IMR-90 (cell line): ENCODE measurements at regions of chr2 and their contacts with region 1.

Region 1: GRCh38 chr2:30146438-30147147 is at the start of gene YPEL5:
- DNase-seq: peak; percentile 99
- ATAC-seq: peak; percentile 93
- H3K4me3 ChIP-seq: peak within 1 kb of the TSS; percentile 67
- H3K27ac ChIP-seq: peak within 1 kb of the TSS; percentile 91
- H3K4me1 ChIP-seq: peaks cover 7% of the 10 kb centered on the region
- H3K27me3 ChIP-seq: no peaks in the 10 kb centered on the region
- CTCF ChIP-seq: no peak
- POLR2A ChIP-seq: peak; percentile 96
- RAD21 ChIP-seq: no peak
- total RNA-seq, gene YPEL5: 40.7 and 54.7 TPM in 2 replicates

Region 2: DNA sequence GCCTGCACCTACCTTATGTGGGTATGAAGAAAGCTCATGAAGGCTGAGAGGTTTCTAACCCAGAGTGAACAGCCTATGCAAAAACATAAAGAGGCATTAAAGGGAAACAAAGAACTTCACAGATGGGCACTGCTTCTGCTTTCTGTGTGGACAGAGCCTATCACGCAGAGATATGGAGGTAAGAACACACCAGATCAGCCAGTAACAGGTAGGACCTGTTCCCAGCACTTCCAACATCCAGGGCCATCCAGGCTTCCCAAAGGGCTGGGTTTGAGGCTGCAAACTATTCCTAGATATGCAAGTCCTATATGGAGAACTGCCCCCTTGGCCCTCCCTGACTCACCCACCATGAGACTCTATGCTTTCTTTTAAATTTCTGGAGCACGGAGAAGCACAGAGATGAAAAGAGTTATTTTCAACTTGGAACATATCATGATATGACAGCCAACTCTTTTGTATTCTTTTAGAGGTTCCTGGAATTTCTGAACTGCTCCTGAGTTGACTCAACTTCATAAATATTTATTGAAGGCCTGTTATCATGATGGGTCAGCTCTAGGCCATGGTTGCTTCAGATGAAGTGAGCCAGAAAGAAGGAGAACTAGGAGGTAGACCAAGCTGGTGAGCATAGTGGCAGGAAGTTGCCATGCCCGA is 1472.4 kb before region 1 on chr2:
- CTCF ChIA-PET with region 1: no interaction called
- POLR2A ChIA-PET with region 1: interaction called, 11 read pairs
- dilution Hi-C with region 1: no loop called
- in situ Hi-C with region 1: no loop called
- intact Hi-C with region 1: no loop called
- DNase-seq: peak; percentile 88
- ATAC-seq: peak; percentile 93
- H3K4me3 ChIP-seq: no peak overlapping the region
- H3K27ac ChIP-seq: peak overlapping the region; percentile 81
- H3K4me1 ChIP-seq: peaks cover 19% of the 10 kb centered on the region
- H3K27me3 ChIP-seq: no peaks in the 10 kb centered on the region
- CTCF ChIP-seq: no peak
- POLR2A ChIP-seq: no peak
- RAD21 ChIP-seq: no peak

Region 3: DNA sequence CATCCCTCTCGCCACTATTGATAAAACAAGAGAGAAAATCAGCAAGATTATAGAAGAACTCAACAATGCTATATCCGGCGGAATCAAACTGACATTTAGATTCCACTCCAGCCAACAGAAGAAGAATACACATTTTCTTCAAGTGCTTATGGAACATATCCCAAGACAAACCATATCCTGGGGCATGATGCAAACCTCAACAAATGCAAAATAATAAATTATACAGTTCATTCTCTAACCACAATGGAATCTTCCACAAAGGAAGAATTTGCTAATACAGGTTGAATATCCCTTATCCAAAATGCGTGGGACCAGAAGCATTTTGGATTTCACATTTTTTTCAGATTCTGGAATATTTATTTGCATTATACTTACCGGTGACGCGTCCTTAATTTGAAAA is 51.2 kb before region 1 on chr2:
- CTCF ChIA-PET with region 1: no interaction called
- POLR2A ChIA-PET with region 1: no interaction called
- dilution Hi-C with region 1: no loop called
- in situ Hi-C with region 1: no loop called
- intact Hi-C with region 1: loop called (anchors 1 kb)
- DNase-seq: peak; percentile 7
- ATAC-seq: no peak
- H3K4me3 ChIP-seq: no peak overlapping the region
- H3K27ac ChIP-seq: no peak overlapping the region
- H3K4me1 ChIP-seq: no peaks in the 10 kb centered on the region
- H3K27me3 ChIP-seq: peaks cover 16% of the 10 kb centered on the region
- CTCF ChIP-seq: no peak
- POLR2A ChIP-seq: no peak
- RAD21 ChIP-seq: no peak

Region 4: DNA sequence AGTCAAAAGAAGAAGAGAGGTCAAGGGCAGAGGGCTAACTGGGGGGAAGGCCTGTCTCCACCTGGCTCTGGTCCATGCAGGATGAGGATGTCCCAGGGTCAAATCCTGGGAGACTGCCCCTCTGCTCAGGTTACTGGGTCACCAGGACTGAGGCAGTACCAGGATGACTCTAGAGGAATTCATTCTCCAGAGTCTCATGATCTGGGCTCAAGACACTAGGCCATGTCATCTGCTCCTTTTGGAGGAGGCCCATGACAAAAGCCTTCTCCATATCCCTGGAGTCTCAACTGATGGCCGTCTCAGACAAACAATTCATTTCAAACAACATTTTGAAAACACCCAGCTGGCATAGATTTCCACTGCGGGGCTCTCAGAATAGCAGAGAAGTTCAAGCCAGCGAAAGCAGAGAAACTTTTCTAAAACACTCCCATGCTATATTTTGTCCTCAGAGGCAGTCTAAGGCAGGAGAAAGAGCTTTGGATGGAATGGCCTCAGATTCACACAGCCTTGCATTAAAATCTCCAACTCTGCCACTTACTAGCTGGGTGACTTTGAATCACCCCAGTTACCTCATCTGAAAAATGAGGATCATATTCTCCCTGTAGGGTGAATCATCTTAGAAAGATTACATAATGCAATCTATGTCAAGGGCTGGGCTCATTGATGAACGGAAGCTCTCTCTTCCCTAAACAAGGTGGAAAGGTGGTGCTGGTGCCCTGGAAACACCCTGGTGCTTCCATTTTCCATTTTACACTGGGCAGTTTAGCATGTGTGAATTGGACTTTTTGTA is 251.7 kb after region 1 on chr2:
- CTCF ChIA-PET with region 1: no interaction called
- POLR2A ChIA-PET with region 1: no interaction called
- dilution Hi-C with region 1: no loop called
- in situ Hi-C with region 1: no loop called
- intact Hi-C with region 1: no loop called
- DNase-seq: peak; percentile 55
- ATAC-seq: peak; percentile 69
- H3K4me3 ChIP-seq: no peak overlapping the region
- H3K27ac ChIP-seq: no peak overlapping the region
- H3K4me1 ChIP-seq: peaks cover 6% of the 10 kb centered on the region
- H3K27me3 ChIP-seq: no peaks in the 10 kb centered on the region
- CTCF ChIP-seq: no peak
- POLR2A ChIP-seq: no peak
- RAD21 ChIP-seq: no peak